CD4-positive, alpha-beta T cell (primary cell): ENCODE measurements at regions of chr3 and their contacts with region 1.

Region 1: DNA sequence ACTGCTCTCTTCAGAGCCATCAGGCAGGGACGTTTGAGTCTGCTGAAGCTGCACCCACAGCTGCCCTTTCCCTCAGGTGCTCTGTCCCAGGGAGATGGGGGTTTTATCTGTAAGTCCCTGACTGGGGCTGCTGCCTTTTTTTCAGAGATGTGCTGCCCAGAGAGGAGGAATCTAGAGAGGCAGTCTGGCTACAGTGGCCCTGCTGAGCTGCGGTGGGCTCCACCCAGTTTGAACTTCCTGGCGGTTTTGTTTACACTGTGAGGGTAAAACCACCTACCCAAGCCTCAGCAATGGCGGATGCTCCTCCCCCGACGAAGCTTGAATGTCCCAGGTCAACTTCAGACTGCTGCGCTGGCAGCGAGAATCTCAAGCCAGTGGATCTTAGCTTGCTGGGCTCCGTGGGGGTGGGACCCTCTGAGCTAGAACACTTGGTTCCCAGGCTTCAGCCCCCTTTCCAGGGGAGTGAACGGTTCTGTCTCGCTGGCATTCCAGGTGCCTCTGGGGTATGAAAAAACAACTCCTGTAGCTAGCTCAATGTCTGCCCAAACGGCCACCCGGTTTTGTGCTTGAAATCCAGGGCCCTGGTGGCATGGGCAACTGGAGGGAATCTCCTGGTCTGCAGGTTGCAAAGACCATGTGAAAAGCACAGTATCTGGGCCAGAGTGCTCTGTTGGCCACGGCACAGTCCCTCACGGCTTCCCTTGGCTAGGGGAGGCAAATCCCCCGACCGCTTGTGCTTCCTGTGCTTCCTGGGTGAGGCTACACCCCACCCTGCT is 21.1 kb upstream of the ST6GAL1 start:
- DNase-seq: peak; percentile 68 to 93 (median 82)
- ATAC-seq: peak; percentile 93
- H3K4me3 ChIP-seq: peak overlapping the region; percentile 33
- H3K4me3 Mint-ChIP-seq: peak overlapping the region; percentile 81
- H3K27ac ChIP-seq: peak overlapping the region; percentile 64 to 69
- H3K27ac Mint-ChIP-seq: peak overlapping the region; percentile 98
- H3K4me1 ChIP-seq: peaks cover 29% of the 10 kb centered on the region
- H3K4me1 Mint-ChIP-seq: peaks cover 44% of the 10 kb centered on the region
- H3K27me3 ChIP-seq: no peaks in the 10 kb centered on the region
- H3K27me3 Mint-ChIP-seq: no peaks in the 10 kb centered on the region
- CTCF ChIP-seq: no peak

Region 2: DNA sequence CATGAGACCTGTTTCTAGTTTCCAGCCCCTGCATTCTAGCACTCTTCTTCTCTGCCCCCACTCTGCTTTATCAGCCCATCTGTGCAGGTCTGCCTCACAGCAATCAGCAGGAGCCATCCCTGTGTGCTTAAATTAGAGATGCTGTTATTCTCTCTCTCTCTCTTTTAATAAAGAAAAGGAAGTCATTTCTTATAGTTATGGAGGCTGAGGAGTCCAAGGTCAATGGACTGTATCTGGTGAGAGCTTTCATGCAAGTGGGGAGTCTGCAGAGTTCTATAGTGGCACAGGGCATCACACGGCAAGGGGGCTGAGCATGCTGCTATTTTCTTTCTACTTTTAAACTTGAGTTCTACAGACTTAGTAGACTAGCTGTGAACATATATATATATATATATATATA is 16.6 kb after region 1 on chr3:
- CTCF ChIA-PET with region 1: interaction called, 8 read pairs
- POLR2A ChIA-PET with region 1: interaction called, 80 read pairs
- intact Hi-C with region 1: loop called (anchors 1 to 2 kb)
- DNase-seq: no peak
- ATAC-seq: no peak
- H3K4me3 ChIP-seq: no peak overlapping the region
- H3K4me3 Mint-ChIP-seq: no peak overlapping the region
- H3K27ac ChIP-seq: no peak overlapping the region
- H3K27ac Mint-ChIP-seq: no peak overlapping the region
- H3K4me1 ChIP-seq: peaks cover 8% of the 10 kb centered on the region
- H3K4me1 Mint-ChIP-seq: peaks cover 6% of the 10 kb centered on the region
- H3K27me3 ChIP-seq: no peaks in the 10 kb centered on the region
- H3K27me3 Mint-ChIP-seq: no peaks in the 10 kb centered on the region
- CTCF ChIP-seq: no peak

Region 3: GRCh38 chr3:187107989-187108388 is 198.7 kb after region 1 on chr3:
- CTCF ChIA-PET with region 1: no interaction called
- POLR2A ChIA-PET with region 1: no interaction called
- intact Hi-C with region 1: no loop called
- DNase-seq: no peak
- ATAC-seq: no peak
- H3K4me3 ChIP-seq: no peak overlapping the region
- H3K4me3 Mint-ChIP-seq: no peak overlapping the region
- H3K27ac ChIP-seq: no peak overlapping the region
- H3K27ac Mint-ChIP-seq: no peak overlapping the region
- H3K4me1 ChIP-seq: peaks cover 2% of the 10 kb centered on the region
- H3K4me1 Mint-ChIP-seq: peaks cover 11% of the 10 kb centered on the region
- H3K27me3 ChIP-seq: no peaks in the 10 kb centered on the region
- H3K27me3 Mint-ChIP-seq: no peaks in the 10 kb centered on the region
- CTCF ChIP-seq: no peak